Right ventricle myocardium inferior (tissue), 1 donor: ENCODE measurements at regions of chr14 and their contacts with region 1.

Region 1: DNA sequence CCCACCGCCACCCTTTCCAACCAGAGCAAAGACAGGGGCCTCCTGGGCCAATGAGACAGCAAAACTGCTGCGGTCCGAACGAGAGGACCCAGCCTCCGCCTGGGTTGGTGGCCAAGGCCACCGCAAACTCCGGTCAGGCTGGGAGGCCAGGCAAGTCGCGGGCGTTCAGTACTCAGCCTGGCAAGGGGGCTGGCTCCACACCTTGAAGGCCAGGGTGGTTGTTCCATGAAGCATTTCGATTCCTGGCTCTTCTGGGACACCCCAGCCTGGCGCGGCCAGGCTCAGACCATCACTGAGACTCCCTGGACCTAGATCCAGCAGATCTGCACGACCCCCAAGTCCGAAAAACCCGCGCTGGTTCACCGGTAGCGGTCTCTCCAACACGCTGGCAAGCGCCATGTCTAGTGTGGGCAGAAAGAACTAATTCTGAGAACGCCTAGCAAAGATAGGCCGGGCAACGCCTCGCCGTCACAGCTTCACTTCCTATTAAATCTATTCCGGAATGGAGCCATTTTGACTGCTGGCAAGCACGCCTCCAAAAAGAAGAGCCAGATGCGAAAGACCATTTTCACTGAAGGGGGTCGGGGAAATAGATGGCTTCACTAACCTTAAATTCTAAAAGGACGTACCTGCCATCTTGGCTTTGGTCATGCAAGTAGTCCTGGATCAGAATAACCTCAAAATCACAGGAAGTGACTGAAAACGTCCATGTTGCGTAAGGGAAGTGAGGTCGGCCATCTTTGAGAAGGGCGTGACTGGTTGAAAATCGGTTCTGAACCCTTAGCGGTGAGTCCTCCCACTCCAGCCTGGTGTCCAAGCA is at the start of gene PSMB5:
- DNase-seq: peak; percentile 93
- ATAC-seq: peak; percentile 99
- total RNA-seq, gene PSMB5: 134 TPM

Region 2: GRCh38 chr14:23006544-23007419 is 27.9 kb before region 1 on chr14:
- intact Hi-C with region 1: loop called (anchors 2 kb)
- DNase-seq: peak; percentile 97
- ATAC-seq: peak; percentile 99